ENCODE measurements at regions of chr3 and their contacts with region 1.

Region 1: GRCh38 chr3:11719406-11720230 is 75.9 kb upstream of the VGLL4 start:
- DNase-seq: peak; percentile 95 to 98
- H3K4me3 ChIP-seq: peak overlapping the region; percentile 98
- H3K4me3 Mint-ChIP-seq: peak overlapping the region; percentile 94
- H3K27ac Mint-ChIP-seq: peak overlapping the region; percentile 96
- H3K4me1 ChIP-seq: peaks cover 22% of the 10 kb centered on the region
- H3K4me1 Mint-ChIP-seq: peaks cover 20% of the 10 kb centered on the region
- H3K27me3 ChIP-seq: no peaks in the 10 kb centered on the region
- H3K27me3 Mint-ChIP-seq: no peaks in the 10 kb centered on the region
- CTCF ChIP-seq: no peak

Region 2: GRCh38 chr3:11643605-11644087 is 76.0 kb before region 1 on chr3 and contains the start of gene VGLL4:
- CTCF ChIA-PET with region 1: no interaction called
- POLR2A ChIA-PET with region 1: no interaction called
- intact Hi-C with region 1: loop called (anchors 2 kb)
- DNase-seq: peak; percentile 81 to 84
- H3K4me3 ChIP-seq: peak within 1 kb of the TSS; percentile 77
- H3K4me3 Mint-ChIP-seq: peak within 1 kb of the TSS; percentile 72
- H3K27ac Mint-ChIP-seq: peak within 1 kb of the TSS; percentile 69
- H3K4me1 ChIP-seq: 0 out of 2 replicates have a peak, but pooled peaks cover 4% of the 10 kb centered on the region
- H3K4me1 Mint-ChIP-seq: peaks cover 8% of the 10 kb centered on the region
- H3K27me3 ChIP-seq: no peaks in the 10 kb centered on the region
- H3K27me3 Mint-ChIP-seq: no peaks in the 10 kb centered on the region
- CTCF ChIP-seq: peak in 1 of 2 experiments; percentile 24
- total RNA-seq, gene VGLL4: 42.8 and 46.1 TPM in 2 replicates

Region 3: DNA sequence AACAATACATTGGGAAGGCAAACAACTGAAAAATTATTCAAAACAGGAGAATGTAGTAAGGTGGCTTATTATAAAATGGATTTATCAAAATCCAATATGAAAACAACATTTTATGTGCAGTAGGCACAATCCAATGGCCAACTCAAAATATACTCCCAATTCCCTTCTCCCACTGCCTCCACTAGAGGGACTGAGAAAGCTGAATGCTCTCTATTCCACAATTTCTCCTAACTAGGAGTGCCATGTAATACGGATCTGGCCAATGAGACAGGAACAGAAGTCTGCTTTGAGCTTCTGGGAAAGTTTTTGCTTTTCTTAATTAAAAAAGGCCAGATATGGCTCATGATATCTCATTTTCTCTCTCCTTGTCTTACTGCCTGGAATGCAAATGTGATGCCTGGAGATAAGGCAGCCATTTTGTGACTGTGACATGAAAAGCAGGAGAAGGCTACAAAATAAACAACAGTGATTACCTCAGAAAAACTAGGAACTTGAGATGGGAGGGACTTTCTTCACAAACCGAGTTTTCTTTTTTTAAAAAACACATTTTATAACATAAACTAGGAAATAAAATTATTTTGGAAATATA is 57.1 kb before region 1 on chr3:
- CTCF ChIA-PET with region 1: no interaction called
- POLR2A ChIA-PET with region 1: no interaction called
- intact Hi-C with region 1: loop called (anchors 2 kb)
- DNase-seq: peak in 1 of 2 experiments; percentile 32
- H3K4me3 ChIP-seq: no peak overlapping the region
- H3K4me3 Mint-ChIP-seq: no peak overlapping the region
- H3K27ac Mint-ChIP-seq: peak overlapping the region; percentile 46
- H3K4me1 ChIP-seq: peaks cover 8% of the 10 kb centered on the region; the same call in 1 of the 2 replicates
- H3K4me1 Mint-ChIP-seq: peaks cover 23% of the 10 kb centered on the region
- H3K27me3 ChIP-seq: no peaks in the 10 kb centered on the region
- H3K27me3 Mint-ChIP-seq: no peaks in the 10 kb centered on the region
- CTCF ChIP-seq: peak; percentile 44 to 66

Region 4: GRCh38 chr3:11690863-11691767 is 28.5 kb before region 1 on chr3:
- CTCF ChIA-PET with region 1: no interaction called
- POLR2A ChIA-PET with region 1: interaction called, 4 read pairs
- intact Hi-C with region 1: loop called (anchors 2 kb)
- DNase-seq: peak in 1 of 2 experiments; percentile 17
- H3K4me3 ChIP-seq: no peak overlapping the region
- H3K4me3 Mint-ChIP-seq: peak overlapping the region; percentile 20
- H3K27ac Mint-ChIP-seq: peak overlapping the region; percentile 70
- H3K4me1 ChIP-seq: peaks cover 14% of the 10 kb centered on the region
- H3K4me1 Mint-ChIP-seq: peaks cover 11% of the 10 kb centered on the region
- H3K27me3 ChIP-seq: no peaks in the 10 kb centered on the region
- H3K27me3 Mint-ChIP-seq: no peaks in the 10 kb centered on the region
- CTCF ChIP-seq: no peak

Region 5: GRCh38 chr3:11770477-11771391 is 51.1 kb after region 1 on chr3:
- CTCF ChIA-PET with region 1: interaction called, 3 read pairs
- POLR2A ChIA-PET with region 1: interaction called, 5 read pairs
- intact Hi-C with region 1: loop called (anchors 1 kb)
- DNase-seq: peak; percentile 89 to 94
- H3K4me3 ChIP-seq: peak overlapping the region; percentile 23
- H3K4me3 Mint-ChIP-seq: peak overlapping the region; percentile 81
- H3K27ac Mint-ChIP-seq: peak overlapping the region; percentile 94
- H3K4me1 ChIP-seq: peaks cover 7% of the 10 kb centered on the region
- H3K4me1 Mint-ChIP-seq: peaks cover 19% of the 10 kb centered on the region
- H3K27me3 ChIP-seq: no peaks in the 10 kb centered on the region
- H3K27me3 Mint-ChIP-seq: no peaks in the 10 kb centered on the region
- CTCF ChIP-seq: no peak